ENCODE measurements at regions of chr1 and their contacts with region 1.

Region 1: DNA sequence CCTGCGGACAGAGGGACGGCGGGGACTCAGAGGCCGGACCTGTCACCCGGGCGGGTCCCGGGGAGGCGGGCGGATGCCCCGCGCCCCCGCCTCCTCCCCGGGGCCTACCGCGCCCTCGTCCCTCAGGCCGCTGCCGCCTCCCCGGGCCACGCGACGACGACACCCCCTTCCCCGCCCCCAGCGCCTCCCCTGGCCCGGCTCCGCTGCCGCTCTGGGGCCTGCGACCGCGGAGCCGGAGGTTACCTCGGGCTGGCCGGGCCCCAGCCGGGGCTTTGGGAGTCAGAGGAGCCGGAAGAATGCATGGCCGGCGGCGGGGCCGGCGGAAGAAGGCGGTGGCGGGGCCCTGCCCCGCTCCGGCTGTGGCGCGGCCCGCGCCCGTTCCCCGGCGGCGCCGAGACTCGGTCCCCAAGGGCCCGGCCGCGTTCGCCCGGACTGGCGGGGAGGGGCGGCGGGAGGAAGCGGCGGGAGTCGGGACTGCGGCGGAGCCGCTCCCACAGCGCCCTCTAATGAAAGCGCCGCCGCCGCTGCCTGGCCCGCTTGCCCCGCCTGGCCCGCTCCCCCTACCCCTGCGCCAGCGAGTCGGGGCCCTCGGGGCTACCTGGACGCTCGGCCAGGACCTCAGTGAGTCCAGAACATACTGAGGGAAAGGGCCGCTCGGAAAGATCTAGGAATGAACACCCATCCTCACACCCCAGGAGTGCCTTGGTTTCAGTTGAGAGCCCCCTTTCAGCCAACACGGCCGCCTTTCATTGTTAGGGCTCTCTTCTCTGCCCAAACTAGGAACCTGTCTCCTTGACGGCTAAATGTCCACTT is at the start of gene LPGAT1:
- DNase-seq: peak; percentile 94
- ATAC-seq: peak; percentile 96
- total RNA-seq, gene LPGAT1: 22.2 TPM

Region 2: DNA sequence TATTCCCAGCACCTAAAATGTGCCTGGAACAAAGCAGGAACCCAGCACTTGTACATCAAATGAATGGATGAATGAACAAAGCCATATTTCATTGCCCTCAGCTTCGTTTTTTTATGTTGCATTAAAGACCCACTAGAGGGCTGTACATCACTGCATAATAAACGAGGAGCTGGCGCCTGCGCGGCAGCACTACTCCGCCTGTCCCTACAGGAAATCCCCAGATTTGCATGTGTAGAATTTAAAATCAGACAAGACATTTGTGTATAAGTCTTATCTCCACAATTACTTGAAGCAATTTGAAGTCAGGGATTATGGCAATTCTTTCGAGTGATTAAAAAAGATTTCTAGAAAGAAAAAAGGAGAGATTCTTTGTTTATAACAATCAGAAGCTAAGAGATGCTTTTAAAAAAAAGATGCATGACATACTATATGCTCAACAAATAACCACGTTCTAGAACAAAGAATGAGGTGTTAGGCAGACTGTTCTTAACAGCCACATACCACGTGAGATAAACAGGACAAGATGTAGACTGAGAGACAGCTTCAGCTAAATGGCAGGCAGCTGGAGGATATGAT is 149.7 kb before region 1 on chr1:
- intact Hi-C with region 1: loop called (anchors 5 kb)
- DNase-seq: peak; percentile 74
- ATAC-seq: peak; percentile 92

Region 3: GRCh38 chr1:211698161-211699026 is 132.1 kb before region 1 on chr1:
- intact Hi-C with region 1: loop called (anchors 1 kb)
- DNase-seq: peak; percentile 95
- ATAC-seq: peak; percentile 87

Measured in Right ventricle myocardium inferior (tissue), 1 donor.